GM10248 (cell line): ENCODE measurements at regions of chr6 and their contacts with region 1.

Region 1: GRCh38 chr6:129598244-129599187 is 111.5 kb downstream of the ARHGAP18 start:
- DNase-seq: peak; percentile 55
- CTCF ChIP-seq: peak; percentile 79

Region 2: GRCh38 chr6:129655334-129655733 is 56.8 kb after region 1 on chr6:
- CTCF ChIA-PET with region 1: interaction called, 21 read pairs
- POLR2A ChIA-PET with region 1: no interaction called
- DNase-seq: no peak
- CTCF ChIP-seq: no peak

Region 3: DNA sequence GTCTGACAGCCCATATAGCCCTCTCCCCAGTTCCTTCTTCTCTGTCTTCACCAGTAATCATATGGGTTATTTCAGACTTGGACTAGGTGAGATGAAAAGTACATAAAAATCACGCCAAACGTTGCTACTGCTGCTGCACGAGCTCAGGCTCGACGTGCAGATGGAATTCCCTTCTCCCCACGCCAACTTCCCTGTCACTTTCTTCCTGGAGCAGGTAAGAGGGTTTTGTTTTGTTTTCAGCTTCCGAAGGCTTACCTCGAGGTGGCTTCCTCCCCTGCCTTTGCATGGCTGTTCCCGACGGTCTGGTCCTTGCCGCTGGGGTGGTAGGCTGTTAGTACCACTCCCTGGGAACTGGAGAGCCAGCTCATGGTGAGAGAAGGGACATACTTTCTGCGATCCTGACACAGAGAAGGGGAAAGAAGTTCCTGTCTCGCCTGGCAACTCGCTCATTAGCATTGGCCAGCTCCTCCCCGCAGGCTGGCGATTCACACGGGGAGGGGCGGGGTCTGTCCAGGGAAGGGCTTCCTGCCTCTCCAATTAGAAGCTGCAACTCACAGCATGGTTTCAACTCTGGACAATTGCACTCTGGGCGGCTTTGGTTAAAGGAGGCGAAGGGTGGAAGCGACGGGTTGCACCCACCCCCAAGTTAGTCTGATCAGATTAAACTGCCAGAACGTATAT is 111.4 kb after region 1 on chr6 and contains the start of gene ARHGAP18:
- CTCF ChIA-PET with region 1: interaction called, 20 read pairs
- POLR2A ChIA-PET with region 1: no interaction called
- DNase-seq: peak; percentile 80
- CTCF ChIP-seq: no peak

Region 4: GRCh38 chr6:129740013-129740412 is 141.5 kb after region 1 on chr6:
- CTCF ChIA-PET with region 1: interaction called, 20 read pairs
- POLR2A ChIA-PET with region 1: no interaction called
- DNase-seq: no peak
- CTCF ChIP-seq: no peak

Region 5: DNA sequence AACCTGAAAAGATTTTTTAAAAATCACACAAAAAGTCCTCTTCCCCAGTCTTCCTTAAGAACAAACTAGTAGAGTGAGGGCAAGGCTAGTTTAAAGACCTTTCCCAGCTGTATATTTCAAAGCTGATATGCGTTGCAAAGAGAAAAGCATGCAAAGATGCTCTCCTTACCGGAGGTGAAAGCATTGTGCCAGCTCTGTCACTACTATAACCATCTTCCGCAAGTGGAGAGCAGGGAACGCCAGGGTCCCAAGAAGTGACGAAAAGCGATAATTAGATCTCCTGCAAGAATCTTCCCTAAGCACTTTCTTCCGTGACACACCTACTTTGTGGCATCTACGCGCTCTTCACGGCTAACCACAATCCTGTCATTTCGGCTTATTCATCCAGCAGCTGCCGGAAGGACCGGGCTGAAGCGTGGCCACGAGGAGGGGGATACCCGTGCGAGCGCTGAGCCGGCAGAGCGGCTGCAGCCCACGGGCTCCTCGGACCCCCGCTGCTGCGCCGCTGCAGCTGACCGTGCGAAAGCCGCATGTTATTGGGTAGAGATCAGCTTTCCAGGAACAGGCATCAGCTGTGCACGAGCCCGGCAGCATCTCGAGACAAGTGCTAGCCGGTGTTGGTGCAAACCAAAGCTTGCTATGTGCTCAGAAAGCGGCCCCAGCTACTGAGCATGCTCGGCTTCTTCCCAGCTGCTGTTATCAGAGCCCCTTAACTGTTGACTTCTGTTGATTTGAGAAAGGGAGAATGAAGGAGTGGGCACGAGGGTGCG is 168.6 kb after region 1 on chr6:
- CTCF ChIA-PET with region 1: interaction called, 23 read pairs
- POLR2A ChIA-PET with region 1: no interaction called
- DNase-seq: peak; percentile 35
- CTCF ChIP-seq: no peak

Region 6: DNA sequence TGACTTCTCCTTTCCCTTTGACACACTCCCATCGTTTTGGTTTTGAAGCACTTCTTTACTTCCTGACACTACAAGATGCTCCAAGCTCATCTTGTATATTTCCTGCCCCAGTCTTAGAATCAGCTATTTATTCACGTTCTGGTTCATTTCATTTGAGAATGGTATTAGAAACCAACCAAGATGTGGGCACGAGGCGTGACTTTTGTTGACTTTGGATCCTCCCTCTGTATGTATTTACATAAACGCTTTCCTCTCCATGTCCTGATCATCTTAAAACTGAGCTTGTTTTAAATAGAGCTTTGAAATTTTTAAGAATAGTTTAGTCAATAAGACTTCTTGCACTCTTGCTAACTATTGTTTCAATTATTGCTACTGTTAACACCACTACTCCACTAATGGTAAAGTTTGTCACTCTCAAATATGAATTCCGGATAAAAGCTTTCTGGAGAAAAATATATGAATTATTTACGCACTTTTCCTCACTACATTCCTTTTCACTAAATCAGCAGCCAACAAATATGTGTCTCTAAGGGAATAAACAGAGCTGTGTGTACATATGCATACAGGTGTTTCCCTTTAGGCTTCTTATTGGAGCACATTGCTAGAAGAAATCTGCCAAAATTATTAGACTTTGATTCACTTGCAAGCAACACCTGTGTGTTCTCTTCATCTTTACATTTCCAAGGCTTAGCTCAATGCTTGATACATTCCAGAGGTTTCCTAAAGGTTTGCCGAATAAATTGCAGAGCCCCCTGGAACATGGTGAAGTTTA is 339.9 kb after region 1 on chr6:
- CTCF ChIA-PET with region 1: interaction called, 12 read pairs
- POLR2A ChIA-PET with region 1: no interaction called
- DNase-seq: no peak
- CTCF ChIP-seq: no peak